HCT116 (cell line): ENCODE measurements at regions of chr16 and their contacts with region 1.

Region 1: DNA sequence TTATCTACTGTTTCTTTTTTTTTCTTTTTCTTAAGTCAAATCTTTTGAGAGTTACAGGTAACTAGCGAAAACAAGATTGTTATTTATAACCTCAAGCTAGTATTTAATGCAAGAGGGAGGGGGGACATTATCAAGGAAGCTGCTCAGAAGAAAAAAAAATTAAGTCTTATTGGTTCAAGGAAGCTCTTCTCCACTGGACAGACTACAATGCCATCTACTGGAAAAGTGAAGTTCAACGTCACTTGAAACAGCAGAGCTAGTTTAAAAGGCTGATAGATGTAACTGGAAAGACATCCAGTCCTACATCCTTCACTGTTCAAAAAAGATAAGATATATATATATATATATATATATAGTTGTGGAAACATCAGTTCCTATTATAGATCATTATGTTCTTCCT is 418.0 kb upstream of the PSMD7 start:
- DNase-seq: peak; percentile 52
- ATAC-seq: peak; percentile 80
- H3K4me3 ChIP-seq: no peak overlapping the region
- H3K27ac ChIP-seq: no peak overlapping the region
- H3K4me1 ChIP-seq: no peaks in the 10 kb centered on the region
- H3K27me3 ChIP-seq: peaks cover 63% of the 10 kb centered on the region
- CTCF ChIP-seq: peak; percentile 50 to 73 (median 59); a peak in 5 of 6 replicates
- POLR2A ChIP-seq: no peak
- RAD21 ChIP-seq: peak; percentile 80

Region 2: DNA sequence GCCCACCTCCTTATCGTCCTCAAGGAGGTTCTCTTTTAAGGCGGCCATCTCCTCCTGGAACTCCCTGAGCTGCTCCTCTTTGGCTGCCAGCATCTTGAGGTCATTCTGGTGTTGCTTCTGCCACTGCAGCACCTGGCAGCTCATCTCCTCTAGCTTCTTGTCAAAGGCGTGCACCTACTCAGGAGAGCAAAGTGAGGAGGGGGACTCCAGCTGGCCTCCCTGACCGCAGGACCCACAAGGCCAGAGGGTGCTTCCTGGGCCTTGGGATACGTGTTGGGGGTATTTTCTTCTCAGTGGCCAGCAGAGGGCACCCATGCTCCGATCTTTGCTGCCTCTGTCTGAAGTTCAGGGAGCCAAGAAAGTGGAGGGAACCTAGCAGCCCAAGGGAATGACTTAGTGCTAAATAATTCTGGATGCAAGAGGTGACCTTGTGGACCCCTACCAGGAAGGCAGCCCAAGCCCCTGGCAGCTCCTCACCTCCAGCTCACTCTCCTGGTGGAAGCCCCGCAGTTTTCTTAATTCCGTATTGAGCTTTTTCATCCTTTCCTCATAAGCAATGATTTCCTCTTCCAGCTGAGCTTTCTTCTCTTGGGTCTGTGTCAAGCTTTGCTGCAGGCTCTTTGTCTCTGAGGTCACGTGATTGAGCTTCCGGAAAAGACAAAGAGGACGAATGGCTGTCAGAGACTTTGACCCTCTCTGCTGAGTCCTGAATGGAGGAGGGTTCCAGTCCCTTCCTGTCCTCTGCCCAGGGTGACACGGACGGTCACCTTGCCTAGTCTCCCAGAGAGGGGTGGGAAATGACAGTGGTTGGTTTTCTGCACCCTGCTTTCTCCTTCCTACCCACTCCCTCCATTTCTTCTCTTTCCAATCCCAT is 1753.6 kb before region 1 on chr16:
- CTCF ChIA-PET with region 1: interaction called, 13 read pairs
- POLR2A ChIA-PET with region 1: no interaction called
- RAD21 ChIA-PET with region 1: no interaction called
- intact Hi-C with region 1: loop called (anchors 5 kb)
- DNase-seq: peak; percentile 42
- ATAC-seq: peak; percentile 97
- H3K4me3 ChIP-seq: no peak overlapping the region
- H3K27ac ChIP-seq: no peak overlapping the region
- H3K4me1 ChIP-seq: no peaks in the 10 kb centered on the region
- H3K27me3 ChIP-seq: no peaks in the 10 kb centered on the region
- CTCF ChIP-seq: peak; percentile 54 to 80 (median 75); a peak in 5 of 6 replicates
- POLR2A ChIP-seq: no peak
- RAD21 ChIP-seq: peak; percentile 83

Region 3: DNA sequence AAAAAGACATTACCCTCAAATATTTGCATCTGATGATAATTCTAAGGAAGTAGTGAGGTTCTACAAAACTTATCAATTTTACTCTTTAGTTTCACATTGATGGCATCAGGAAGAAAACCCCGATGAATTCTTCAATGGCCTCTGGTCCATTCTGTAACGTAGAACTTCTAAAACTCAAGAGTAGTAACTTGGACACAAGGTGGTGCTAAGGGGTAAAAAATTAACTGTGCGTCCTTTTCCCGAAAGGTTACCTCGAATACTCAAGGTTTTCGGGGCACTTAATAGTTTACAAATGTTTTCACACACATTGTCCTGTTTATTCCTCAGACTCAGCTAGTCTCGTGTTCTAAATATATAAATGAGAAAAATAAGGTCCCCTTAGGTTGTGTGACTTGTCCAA is 313.3 kb before region 1 on chr16:
- CTCF ChIA-PET with region 1: interaction called, 16 read pairs
- POLR2A ChIA-PET with region 1: no interaction called
- RAD21 ChIA-PET with region 1: no interaction called
- intact Hi-C with region 1: loop called (anchors 1 kb)
- DNase-seq: peak; percentile 15
- ATAC-seq: peak; percentile 72
- H3K4me3 ChIP-seq: no peak overlapping the region
- H3K27ac ChIP-seq: no peak overlapping the region
- H3K4me1 ChIP-seq: no peaks in the 10 kb centered on the region
- H3K27me3 ChIP-seq: peaks cover 39% of the 10 kb centered on the region
- CTCF ChIP-seq: peak; percentile 32 to 45 (median 43); a peak in 5 of 6 replicates
- POLR2A ChIP-seq: no peak
- RAD21 ChIP-seq: peak; percentile 64

Region 4: DNA sequence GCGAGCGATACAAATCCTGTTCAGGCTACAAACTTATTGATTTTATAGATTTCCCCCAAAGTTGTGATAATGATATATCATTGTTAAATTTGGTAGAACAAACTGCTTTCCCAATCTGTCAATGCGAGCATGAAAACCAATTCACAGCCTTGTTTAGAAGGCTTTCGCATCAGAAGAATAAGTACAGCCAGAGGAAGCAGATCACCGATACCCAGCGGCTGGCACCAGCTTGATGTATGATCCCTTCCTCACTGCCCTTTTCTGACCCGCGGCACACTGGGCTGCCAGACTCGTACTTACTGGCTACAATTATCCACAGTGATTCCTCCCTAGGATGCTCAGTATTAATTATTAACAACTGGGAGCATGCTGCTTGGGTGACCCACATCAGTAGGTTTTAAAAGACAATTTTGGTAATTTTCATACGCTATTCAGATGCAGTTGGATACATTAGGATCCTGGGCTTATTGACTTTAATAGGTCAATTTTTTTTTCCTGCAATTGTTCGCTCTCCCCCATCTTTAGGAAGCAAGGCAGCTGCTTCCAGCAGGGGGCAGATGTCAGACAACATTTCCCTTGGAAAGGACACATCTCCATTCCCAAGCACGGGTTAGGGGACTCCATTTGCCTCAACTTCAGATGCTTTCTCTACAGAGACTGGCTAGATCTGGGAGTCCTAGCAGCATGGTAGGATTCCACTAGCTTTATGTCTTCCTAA is 164.7 kb before region 1 on chr16:
- CTCF ChIA-PET with region 1: interaction called, 6 read pairs
- POLR2A ChIA-PET with region 1: no interaction called
- RAD21 ChIA-PET with region 1: no interaction called
- intact Hi-C with region 1: loop called (anchors 1 kb)
- DNase-seq: peak; percentile 27
- ATAC-seq: peak; percentile 80
- H3K4me3 ChIP-seq: no peak overlapping the region
- H3K27ac ChIP-seq: no peak overlapping the region
- H3K4me1 ChIP-seq: no peaks in the 10 kb centered on the region
- H3K27me3 ChIP-seq: peaks cover 28% of the 10 kb centered on the region; the same call in 1 of the 2 replicates
- CTCF ChIP-seq: peak; percentile 29 to 75 (median 69); a peak in 4 of 6 replicates
- POLR2A ChIP-seq: no peak
- RAD21 ChIP-seq: peak; percentile 51

Region 5: DNA sequence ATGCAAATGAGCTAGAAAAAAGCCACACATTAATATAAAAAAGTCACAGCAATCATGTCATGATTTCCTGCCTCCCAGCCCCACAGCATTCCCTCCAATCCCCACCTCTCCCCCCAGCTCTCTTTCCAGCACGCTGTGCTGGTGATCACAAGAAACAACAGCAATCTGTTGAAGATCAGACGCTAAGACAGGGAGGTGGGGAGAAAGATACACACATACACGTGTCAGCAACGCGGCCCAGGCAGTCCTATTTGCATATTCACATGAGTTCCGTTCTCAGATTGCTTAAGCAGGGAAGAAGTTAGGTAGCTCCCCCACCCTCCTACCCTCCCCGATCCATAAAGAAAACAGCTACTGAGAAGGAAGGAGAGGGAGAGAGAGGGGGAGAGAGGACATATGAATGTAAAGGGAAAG is 12.5 kb after region 1 on chr16:
- CTCF ChIA-PET with region 1: interaction called, 11 read pairs
- POLR2A ChIA-PET with region 1: no interaction called
- RAD21 ChIA-PET with region 1: no interaction called
- intact Hi-C with region 1: no loop called
- DNase-seq: no peak
- ATAC-seq: no peak
- H3K4me3 ChIP-seq: no peak overlapping the region
- H3K27ac ChIP-seq: no peak overlapping the region
- H3K4me1 ChIP-seq: no peaks in the 10 kb centered on the region
- H3K27me3 ChIP-seq: peaks cover 59% of the 10 kb centered on the region
- CTCF ChIP-seq: no peak
- POLR2A ChIP-seq: no peak
- RAD21 ChIP-seq: no peak